AG04450 (cell line): ENCODE measurements at regions of chr5 and their contacts with region 1.

Region 1: GRCh38 chr5:176436661-176437071 is 11.5 kb upstream of the FAF2 start:
- DNase-seq: no peak
- H3K4me3 ChIP-seq: no peak overlapping the region
- H3K27ac ChIP-seq: no peak overlapping the region
- H3K27me3 ChIP-seq: no peaks in the 10 kb centered on the region
- CTCF ChIP-seq: no peak

Region 2: GRCh38 chr5:175517818-175518450 is 918.7 kb before region 1 on chr5:
- CTCF ChIA-PET with region 1: no interaction called
- POLR2A ChIA-PET with region 1: no interaction called
- DNase-seq: peak; percentile 61
- H3K4me3 ChIP-seq: no peak overlapping the region
- H3K27ac ChIP-seq: peak overlapping the region; percentile 78
- H3K27me3 ChIP-seq: no peaks in the 10 kb centered on the region
- CTCF ChIP-seq: no peak

Region 3: GRCh38 chr5:176543428-176544173 is 106.9 kb after region 1 on chr5:
- CTCF ChIA-PET with region 1: interaction called, 11 read pairs
- POLR2A ChIA-PET with region 1: no interaction called
- DNase-seq: no peak
- H3K4me3 ChIP-seq: peak overlapping the region; percentile 61
- H3K27ac ChIP-seq: no peak overlapping the region
- H3K27me3 ChIP-seq: peaks cover 3% of the 10 kb centered on the region
- CTCF ChIP-seq: no peak

Region 4: DNA sequence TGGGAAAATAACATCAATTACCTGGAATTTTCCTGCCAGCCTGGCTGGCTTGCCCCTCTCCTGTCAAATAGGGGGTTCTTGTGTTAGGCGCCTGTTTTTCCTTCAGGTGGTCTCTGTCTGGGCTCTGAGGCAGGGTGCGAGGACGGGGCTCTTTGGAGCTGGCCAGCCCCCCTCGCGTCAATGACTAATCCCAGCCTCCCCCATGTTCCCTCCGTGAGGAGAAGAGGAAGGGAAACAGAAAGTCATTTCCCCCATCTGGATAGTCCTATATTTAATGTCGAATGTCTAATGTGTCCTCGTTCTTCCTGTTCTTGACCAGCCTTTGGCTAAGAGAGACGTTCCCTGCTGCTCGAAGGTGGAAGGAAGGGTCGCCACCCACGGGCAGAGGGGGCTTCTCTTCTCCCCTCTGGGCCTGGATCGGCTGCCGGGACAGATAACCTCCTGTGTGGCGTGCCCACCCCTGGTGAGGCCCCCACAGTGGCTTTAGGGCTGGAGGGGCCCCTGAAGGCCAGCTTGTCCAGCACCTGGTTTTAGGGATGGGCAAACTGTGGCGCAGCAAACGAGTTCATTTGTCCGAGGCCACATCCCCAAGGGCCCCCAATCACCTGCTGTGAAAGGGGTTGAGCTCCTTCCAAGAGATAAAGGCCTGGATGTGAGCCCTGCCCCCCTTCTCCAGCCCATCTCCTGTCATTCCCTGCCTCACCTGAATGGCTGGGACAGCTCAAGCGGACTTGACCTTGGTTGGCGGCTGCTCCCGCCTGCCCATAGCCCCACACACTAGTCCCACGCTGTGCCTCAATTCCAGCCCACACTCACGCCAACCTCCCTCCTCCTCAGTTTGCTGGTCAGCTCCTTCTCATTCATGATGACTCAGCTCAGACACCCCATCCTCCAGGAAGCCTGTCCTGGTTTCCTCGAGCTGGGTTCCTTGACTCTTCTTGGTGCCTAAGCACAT is 337.8 kb after region 1 on chr5:
- CTCF ChIA-PET with region 1: no interaction called
- POLR2A ChIA-PET with region 1: no interaction called
- DNase-seq: no peak
- H3K4me3 ChIP-seq: no peak overlapping the region
- H3K27ac ChIP-seq: no peak overlapping the region
- H3K27me3 ChIP-seq: peaks cover 35% of the 10 kb centered on the region
- CTCF ChIP-seq: no peak